Naive thymus-derived CD4-positive, alpha-beta T cell (primary cell): ENCODE measurements at regions of chr6 and their contacts with region 1.

Region 1: DNA sequence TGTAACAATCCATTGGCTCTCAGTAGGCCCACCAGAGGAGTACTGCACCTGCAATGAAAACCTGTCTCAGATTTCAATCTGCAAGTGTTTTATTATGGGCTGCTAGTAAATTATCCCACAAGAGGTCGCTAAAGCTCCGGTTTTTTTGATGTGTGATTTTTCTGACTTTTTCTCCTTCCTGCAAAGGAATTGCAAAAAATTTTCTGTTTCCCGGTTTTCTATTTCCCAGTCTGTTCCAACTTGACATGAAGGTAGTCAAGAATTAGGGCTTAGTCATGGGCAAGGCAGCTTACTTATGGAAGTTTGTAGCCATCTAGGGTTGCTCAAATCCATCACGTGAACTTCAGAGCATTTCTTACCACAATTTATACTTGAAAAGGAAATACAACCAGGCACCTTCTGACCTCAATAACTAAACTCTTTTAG is 38.5 kb upstream of the AHI1 start:
- DNase-seq: peak in 7 of 9 donors; percentile 4 to 54 (median 36)
- ATAC-seq: peak; percentile 60
- H3K4me3 ChIP-seq: no peak overlapping the region
- H3K4me3 Mint-ChIP-seq: peak overlapping the region in 8 of 10 donors; percentile 48 to 80 (median 69)
- H3K27ac ChIP-seq: no peak overlapping the region
- H3K27ac Mint-ChIP-seq: peak overlapping the region in 3 of 9 donors; percentile 34 to 80 (median 41)
- H3K4me1 ChIP-seq: peaks cover 4 to 12% of the 10 kb centered on the region in 2 donors
- H3K4me1 Mint-ChIP-seq: peaks cover 0 to 46% (median 9%) of the 10 kb centered on the region in 7 donors
- H3K27me3 ChIP-seq: no peaks in the 10 kb centered on the region
- H3K27me3 Mint-ChIP-seq: peaks cover 0 to 4% (median 0%) of the 10 kb centered on the region in 5 donors

Region 2: GRCh38 chr6:135451693-135452092 is 84.3 kb before region 1 on chr6:
- CTCF ChIA-PET with region 1: interaction called, 3 read pairs
- POLR2A ChIA-PET with region 1: no interaction called
- intact Hi-C with region 1: loop called in 1 of 2 experiments (anchors 1 kb)
- DNase-seq: peak in 6 of 9 donors; percentile 13 to 54 (median 44)
- ATAC-seq: peak; percentile 63
- H3K4me3 ChIP-seq: no peak overlapping the region
- H3K4me3 Mint-ChIP-seq: no peak overlapping the region
- H3K27ac ChIP-seq: no peak overlapping the region
- H3K27ac Mint-ChIP-seq: no peak overlapping the region
- H3K4me1 ChIP-seq: no peaks in the 10 kb centered on the region
- H3K4me1 Mint-ChIP-seq: peaks cover 0 to 4% (median 0%) of the 10 kb centered on the region in 7 donors
- H3K27me3 ChIP-seq: no peaks in the 10 kb centered on the region
- H3K27me3 Mint-ChIP-seq: no peaks in the 10 kb centered on the region

Region 3: GRCh38 chr6:135557582-135557981 is 21.6 kb after region 1 on chr6:
- CTCF ChIA-PET with region 1: no interaction called
- POLR2A ChIA-PET with region 1: no interaction called
- intact Hi-C with region 1: loop called in 1 of 2 experiments (anchors 2 kb)
- DNase-seq: no peak
- ATAC-seq: no peak
- H3K4me3 ChIP-seq: no peak overlapping the region
- H3K4me3 Mint-ChIP-seq: no peak overlapping the region
- H3K27ac ChIP-seq: no peak overlapping the region
- H3K27ac Mint-ChIP-seq: no peak overlapping the region
- H3K4me1 ChIP-seq: no peaks in the 10 kb centered on the region
- H3K4me1 Mint-ChIP-seq: peaks cover 0 to 55% (median 0%) of the 10 kb centered on the region in 7 donors
- H3K27me3 ChIP-seq: no peaks in the 10 kb centered on the region
- H3K27me3 Mint-ChIP-seq: peaks cover 0 to 6% (median 0%) of the 10 kb centered on the region in 5 donors

Region 4: GRCh38 chr6:135624402-135625295 is 88.6 kb after region 1 on chr6:
- CTCF ChIA-PET with region 1: no interaction called
- POLR2A ChIA-PET with region 1: no interaction called
- intact Hi-C with region 1: loop called in 1 of 2 experiments (anchors 1 kb)
- DNase-seq: peak in 3 of 9 donors; percentile 1 to 9 (median 7)
- ATAC-seq: no peak
- H3K4me3 ChIP-seq: no peak overlapping the region
- H3K4me3 Mint-ChIP-seq: peak overlapping the region in 2 of 10 donors; percentile 2 to 17
- H3K27ac ChIP-seq: no peak overlapping the region
- H3K27ac Mint-ChIP-seq: peak overlapping the region in 3 of 9 donors; percentile 13 to 91 (median 47)
- H3K4me1 ChIP-seq: no peaks in the 10 kb centered on the region
- H3K4me1 Mint-ChIP-seq: peaks cover 5 to 51% (median 16%) of the 10 kb centered on the region in 7 donors
- H3K27me3 ChIP-seq: no peaks in the 10 kb centered on the region
- H3K27me3 Mint-ChIP-seq: no peaks in the 10 kb centered on the region

Region 5: GRCh38 chr6:135851442-135852271 is 315.7 kb after region 1 on chr6 and contains the start of gene PDE7B:
- CTCF ChIA-PET with region 1: no interaction called
- POLR2A ChIA-PET with region 1: no interaction called
- intact Hi-C with region 1: loop called in 1 of 2 experiments (anchors 2 kb)
- DNase-seq: peak; percentile 18 to 73 (median 46)
- ATAC-seq: peak; percentile 94
- H3K4me3 ChIP-seq: peak within 1 kb of the TSS; percentile 53
- H3K4me3 Mint-ChIP-seq: peak within 1 kb of the TSS in 9 of 10 donors; percentile 71 to 90 (median 87)
- H3K27ac ChIP-seq: peak within 1 kb of the TSS; percentile 75
- H3K27ac Mint-ChIP-seq: peak within 1 kb of the TSS in 6 of 9 donors; percentile 78 to 96 (median 88)
- H3K4me1 ChIP-seq: peaks cover 0 to 23% of the 10 kb centered on the region in 2 donors
- H3K4me1 Mint-ChIP-seq: peaks cover 5 to 47% (median 36%) of the 10 kb centered on the region in 7 donors
- H3K27me3 ChIP-seq: no peaks in the 10 kb centered on the region
- H3K27me3 Mint-ChIP-seq: no peaks in the 10 kb centered on the region
- total RNA-seq, gene PDE7B: 0.37 to 18.7 (median 1.7) TPM

Region 6: GRCh38 chr6:136226027-136226673 is 690.1 kb after region 1 on chr6:
- CTCF ChIA-PET with region 1: interaction called, 29 read pairs
- POLR2A ChIA-PET with region 1: no interaction called
- intact Hi-C with region 1: loop called (anchors 1 kb)
- DNase-seq: peak; percentile 25 to 68 (median 57)
- ATAC-seq: peak; percentile 95
- H3K4me3 ChIP-seq: no peak overlapping the region
- H3K4me3 Mint-ChIP-seq: peak overlapping the region in 9 of 10 donors; percentile 4 to 73 (median 60)
- H3K27ac ChIP-seq: no peak overlapping the region
- H3K27ac Mint-ChIP-seq: peak overlapping the region in 1 of 9 donors; percentile 6
- H3K4me1 ChIP-seq: no peaks in the 10 kb centered on the region
- H3K4me1 Mint-ChIP-seq: peaks cover 0 to 23% (median 6%) of the 10 kb centered on the region in 7 donors
- H3K27me3 ChIP-seq: no peaks in the 10 kb centered on the region
- H3K27me3 Mint-ChIP-seq: no peaks in the 10 kb centered on the region